H1 (cell line): ENCODE measurements at regions of chr1 and their contacts with region 1.

Region 1: DNA sequence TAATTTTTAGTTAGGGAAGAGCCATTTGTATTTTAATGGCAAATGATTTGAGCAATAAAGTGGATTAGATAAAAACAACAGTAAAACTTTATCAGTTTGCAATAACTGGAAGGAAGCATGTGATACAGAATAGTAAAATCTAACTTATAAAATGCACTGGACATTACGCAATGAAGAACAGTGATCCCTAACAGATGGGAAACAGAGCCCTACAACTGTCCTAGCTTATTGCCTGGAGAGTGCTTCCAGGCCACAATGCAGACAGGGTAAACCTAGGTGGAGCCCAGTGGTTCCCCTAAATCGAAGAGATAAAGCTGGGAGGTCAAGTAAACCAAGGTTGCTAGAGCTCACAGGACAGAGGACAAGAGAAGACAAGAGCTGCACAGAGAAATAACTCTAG is 7.0 kb downstream of the OMA1 start:
- DNase-seq: no peak
- H3K4me3 ChIP-seq: no peak overlapping the region
- H3K27ac ChIP-seq: no peak overlapping the region
- H3K4me1 ChIP-seq: no peaks in the 10 kb centered on the region
- H3K27me3 ChIP-seq: no peaks in the 10 kb centered on the region
- CTCF ChIP-seq: no peak
- EP300 ChIP-seq: no peak
- POLR2A ChIP-seq: no peak
- RAD21 ChIP-seq: no peak

Region 2: GRCh38 chr1:58502519-58502918 is 37.0 kb before region 1 on chr1:
- CTCF ChIA-PET with region 1: no interaction called
- POLR2A ChIA-PET with region 1: no interaction called
- DNase-seq: no peak
- H3K4me3 ChIP-seq: no peak overlapping the region
- H3K27ac ChIP-seq: no peak overlapping the region
- H3K4me1 ChIP-seq: peaks cover 0 to 2% (median 0%) of the 10 kb centered on the region in 4 experiments; a peak in 3 of 7 replicates
- H3K27me3 ChIP-seq: no peaks in the 10 kb centered on the region
- CTCF ChIP-seq: no peak
- EP300 ChIP-seq: no peak
- POLR2A ChIP-seq: no peak
- RAD21 ChIP-seq: no peak

Region 3: GRCh38 chr1:58515794-58516401 is 23.7 kb before region 1 on chr1:
- CTCF ChIA-PET with region 1: interaction called, 14 read pairs
- POLR2A ChIA-PET with region 1: interaction called, 3 read pairs
- DNase-seq: peak in 1 of 2 experiments; percentile 7
- H3K4me3 ChIP-seq: no peak overlapping the region
- H3K27ac ChIP-seq: no peak overlapping the region
- H3K4me1 ChIP-seq: no peaks in the 10 kb centered on the region
- H3K27me3 ChIP-seq: peaks cover 0 to 1% (median 0%) of the 10 kb centered on the region in 4 experiments; a peak in 1 of 7 replicates
- CTCF ChIP-seq: peak in 2 of 3 experiments; percentile 62 to 63; a peak in 3 of 4 replicates
- EP300 ChIP-seq: no peak
- POLR2A ChIP-seq: no peak
- RAD21 ChIP-seq: peak; percentile 86 to 87

Region 4: GRCh38 chr1:58561633-58562032 is 22.1 kb after region 1 on chr1:
- CTCF ChIA-PET with region 1: no interaction called
- POLR2A ChIA-PET with region 1: no interaction called
- DNase-seq: no peak
- H3K4me3 ChIP-seq: no peak overlapping the region
- H3K27ac ChIP-seq: no peak overlapping the region
- H3K4me1 ChIP-seq: no peaks in the 10 kb centered on the region; a peak in 1 of 7 replicates
- H3K27me3 ChIP-seq: no peaks in the 10 kb centered on the region
- CTCF ChIP-seq: no peak
- EP300 ChIP-seq: no peak
- POLR2A ChIP-seq: no peak
- RAD21 ChIP-seq: no peak